Posterior vena cava (tissue), 2 donors: ENCODE measurements at regions of chr3 and their contacts with region 1.

Region 1: DNA sequence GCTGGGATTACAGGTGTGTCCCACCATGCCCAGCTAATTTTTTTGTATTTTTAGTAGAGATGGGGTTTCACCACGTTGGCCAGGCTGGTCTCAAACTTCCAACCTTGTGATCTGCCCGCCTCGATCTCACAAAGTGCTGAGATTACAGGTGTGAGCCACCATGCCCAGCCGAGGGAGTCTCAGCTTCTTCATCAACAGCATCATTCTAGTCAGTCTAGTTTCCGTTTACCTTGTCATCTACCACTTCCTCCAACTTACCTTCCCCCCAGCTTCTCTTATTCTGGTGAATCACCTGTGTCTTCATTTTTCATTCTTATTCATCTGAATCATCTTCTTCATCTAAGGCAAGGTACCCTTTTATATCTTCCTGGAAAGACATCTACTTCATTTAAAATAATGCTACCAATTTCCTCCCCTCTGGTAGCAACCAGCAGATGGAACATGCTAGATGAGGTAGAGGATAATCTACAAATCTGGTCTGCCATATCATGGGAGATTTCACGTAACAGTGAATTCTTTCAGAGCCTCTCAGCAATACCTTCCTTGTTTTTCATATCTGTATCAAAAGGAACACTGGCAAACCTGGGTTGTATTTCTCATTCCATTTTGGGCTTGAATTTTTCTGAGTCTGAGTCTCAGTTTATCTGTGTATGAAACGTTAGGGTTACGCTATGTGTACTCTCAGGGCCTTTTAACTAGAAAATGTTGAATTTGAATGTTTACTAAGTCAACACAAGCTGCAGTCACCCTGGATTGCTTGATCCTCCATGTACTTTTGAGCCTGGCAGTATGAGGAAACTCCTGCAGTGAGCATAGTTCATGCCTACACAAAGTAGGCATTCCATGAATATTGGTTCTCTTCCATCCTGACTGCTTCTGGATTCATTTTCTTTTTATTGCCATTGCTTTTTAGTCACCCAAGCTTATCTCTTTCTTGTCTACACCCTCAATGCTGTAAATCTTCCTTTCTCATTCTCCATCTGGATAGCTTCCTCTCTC is 16.8 kb downstream of the LPP start:
- DNase-seq: no peak

Region 2: DNA sequence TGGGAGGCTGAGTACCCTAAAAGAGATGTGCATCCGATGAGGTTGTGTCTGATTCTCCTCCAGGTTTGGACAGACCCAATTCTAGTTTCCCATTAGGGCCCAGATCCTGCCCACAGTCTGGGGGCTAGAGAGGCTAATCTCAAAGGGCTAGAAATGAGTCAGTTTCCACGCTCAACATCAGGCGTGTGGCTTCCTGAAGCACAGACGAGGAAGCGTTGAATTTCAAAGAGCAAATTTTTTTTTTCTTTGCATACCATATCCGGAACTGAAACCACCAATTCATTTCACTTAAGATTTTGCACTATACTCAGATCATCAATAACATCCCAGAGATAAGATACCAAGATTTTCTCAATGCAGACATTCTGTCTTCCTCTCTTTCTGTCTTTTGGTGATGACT is 251.7 kb before region 1 on chr3:
- intact Hi-C with region 1: no loop called
- DNase-seq: no peak

Region 3: GRCh38 chr3:188205992-188206416 is 35.2 kb after region 1 on chr3:
- intact Hi-C with region 1: loop called in 1 of 2 experiments (anchors 5 kb)
- DNase-seq: no peak